ENCODE measurements at regions of chr11 and their contacts with region 1.

Region 1: GRCh38 chr11:118002541-118003423 is 16.6 kb downstream of the IL10RA start:
- DNase-seq: peak; percentile 88
- H3K4me3 Mint-ChIP-seq: peak overlapping the region; percentile 72
- H3K27ac Mint-ChIP-seq: peak overlapping the region; percentile 99
- H3K4me1 Mint-ChIP-seq: peaks cover 89% of the 10 kb centered on the region
- H3K27me3 Mint-ChIP-seq: no peaks in the 10 kb centered on the region

Region 2: DNA sequence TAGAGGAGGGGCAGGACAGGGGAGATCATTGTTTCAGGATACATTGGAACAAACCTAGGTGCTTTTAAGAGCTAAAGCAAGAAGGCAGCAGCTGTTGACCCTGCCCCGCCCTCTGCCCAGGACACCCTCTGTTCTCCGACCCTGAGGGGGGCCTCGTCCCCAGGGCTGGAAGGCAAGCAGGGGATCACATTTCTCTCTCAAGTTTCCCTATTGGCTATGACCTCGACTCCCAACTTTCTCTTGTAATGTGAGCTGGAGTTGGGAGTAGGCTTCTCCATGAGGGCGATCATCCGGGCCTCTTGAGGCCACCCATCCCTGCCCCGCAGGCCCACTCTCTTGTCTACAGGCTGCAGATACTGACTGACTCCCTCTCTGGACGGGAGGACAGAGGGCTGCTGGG is 243.5 kb before region 1 on chr11:
- intact Hi-C with region 1: no loop called
- DNase-seq: no peak
- H3K4me3 Mint-ChIP-seq: no peak overlapping the region
- H3K27ac Mint-ChIP-seq: no peak overlapping the region
- H3K4me1 Mint-ChIP-seq: no peaks in the 10 kb centered on the region
- H3K27me3 Mint-ChIP-seq: peaks cover 15% of the 10 kb centered on the region

Region 3: GRCh38 chr11:117817368-117818040 is 185.3 kb before region 1 on chr11:
- intact Hi-C with region 1: loop called (anchors 2 kb)
- DNase-seq: peak; percentile 96
- H3K4me3 Mint-ChIP-seq: peak overlapping the region; percentile 79
- H3K27ac Mint-ChIP-seq: peak overlapping the region; percentile 99
- H3K4me1 Mint-ChIP-seq: peaks cover 63% of the 10 kb centered on the region
- H3K27me3 Mint-ChIP-seq: peaks cover 2% of the 10 kb centered on the region

Region 4: GRCh38 chr11:117936973-117937372 is 65.8 kb before region 1 on chr11:
- intact Hi-C with region 1: no loop called
- DNase-seq: no peak
- H3K4me3 Mint-ChIP-seq: no peak overlapping the region
- H3K27ac Mint-ChIP-seq: no peak overlapping the region
- H3K4me1 Mint-ChIP-seq: peaks cover 15% of the 10 kb centered on the region
- H3K27me3 Mint-ChIP-seq: no peaks in the 10 kb centered on the region

Region 5: GRCh38 chr11:117946842-117947526 is 55.8 kb before region 1 on chr11:
- intact Hi-C with region 1: loop called (anchors 1 kb)
- DNase-seq: peak; percentile 95
- H3K4me3 Mint-ChIP-seq: peak overlapping the region; percentile 4
- H3K27ac Mint-ChIP-seq: peak overlapping the region; percentile 67
- H3K4me1 Mint-ChIP-seq: peaks cover 79% of the 10 kb centered on the region
- H3K27me3 Mint-ChIP-seq: peaks cover 3% of the 10 kb centered on the region

Region 6: DNA sequence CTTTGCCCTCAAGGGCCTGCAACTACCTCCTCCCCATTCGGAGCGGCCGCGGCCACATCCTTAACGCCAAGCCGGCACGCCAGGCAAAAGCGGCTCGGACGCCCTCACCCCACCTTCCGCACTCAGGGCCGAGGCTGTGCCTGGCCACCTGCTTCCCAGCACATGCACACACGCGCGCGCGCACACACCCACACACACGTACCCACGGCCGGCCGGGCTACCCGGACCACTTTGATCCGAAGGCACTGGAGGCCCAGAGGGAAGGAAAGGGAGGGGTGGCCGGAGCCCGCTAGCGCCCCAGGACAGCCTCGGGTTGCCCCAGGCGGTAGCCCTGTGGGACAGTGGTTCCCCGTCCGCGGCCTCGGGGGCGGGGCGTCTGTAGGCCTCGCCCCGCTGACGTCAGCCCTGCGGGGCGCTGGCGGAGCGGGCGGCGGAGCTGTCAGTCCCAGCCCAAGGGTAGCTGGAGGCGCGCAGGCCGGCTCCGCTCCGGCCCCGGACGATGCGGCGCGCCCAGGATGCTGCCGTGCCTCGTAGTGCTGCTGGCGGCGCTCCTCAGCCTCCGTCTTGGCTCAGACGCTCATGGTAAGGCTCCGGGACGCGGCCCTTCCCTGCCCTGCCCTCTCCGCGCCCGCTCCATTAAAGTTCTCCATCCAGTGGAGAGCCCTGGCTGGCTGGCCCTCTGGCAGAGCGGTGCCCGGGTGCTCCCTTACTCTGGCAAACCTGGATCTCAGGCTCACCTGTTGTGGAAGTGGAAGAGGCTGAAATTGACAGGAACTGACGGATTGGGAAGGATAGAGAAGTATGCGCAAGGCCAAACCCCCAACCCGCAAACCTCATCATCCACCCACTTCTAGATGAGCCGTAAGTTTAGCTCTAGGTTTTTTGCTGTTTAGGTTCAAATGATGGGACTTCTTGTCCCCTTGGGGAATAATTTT is 16.6 kb before region 1 on chr11 and contains the start of gene IL10RA:
- intact Hi-C with region 1: loop called (anchors 1 kb)
- DNase-seq: peak; percentile 98
- H3K4me3 Mint-ChIP-seq: peak within 1 kb of the TSS; percentile 88
- H3K27ac Mint-ChIP-seq: peak within 1 kb of the TSS; percentile 98
- H3K4me1 Mint-ChIP-seq: peaks cover 69% of the 10 kb centered on the region
- H3K27me3 Mint-ChIP-seq: no peaks in the 10 kb centered on the region
- total RNA-seq, gene IL10RA: 86.6 and 89.9 TPM in 2 replicates

Region 7: GRCh38 chr11:118046051-118046963 is 43.5 kb after region 1 on chr11:
- intact Hi-C with region 1: loop called (anchors 1 kb)
- DNase-seq: peak; percentile 76
- H3K4me3 Mint-ChIP-seq: peak overlapping the region; percentile 51
- H3K27ac Mint-ChIP-seq: peak overlapping the region; percentile 87
- H3K4me1 Mint-ChIP-seq: peaks cover 75% of the 10 kb centered on the region
- H3K27me3 Mint-ChIP-seq: no peaks in the 10 kb centered on the region

Region 8: GRCh38 chr11:118216621-118217481 is 214.1 kb after region 1 on chr11:
- intact Hi-C with region 1: loop called (anchors 5 kb)
- DNase-seq: peak; percentile 84
- H3K4me3 Mint-ChIP-seq: peak overlapping the region; percentile 86
- H3K27ac Mint-ChIP-seq: peak overlapping the region; percentile 100
- H3K4me1 Mint-ChIP-seq: peaks cover 87% of the 10 kb centered on the region
- H3K27me3 Mint-ChIP-seq: no peaks in the 10 kb centered on the region

Measured in activated CD4-positive, alpha-beta T cell treated with anti-CD3 and anti-CD28 coated beads, Interleukin-2, amount 10 ng/mL, durations not matched to agents 24 days and 14 days (primary cell).